SK-N-SH (cell line): ENCODE measurements at regions of chr17 and their contacts with region 1.

Region 1: GRCh38 chr17:34637548-34638525 is 58.5 kb downstream of the TMEM132E start:
- DNase-seq: peak; percentile 92
- H3K4me3 ChIP-seq: no peak overlapping the region; a peak in 1 of 4 replicates
- H3K27ac ChIP-seq: no peak overlapping the region
- H3K4me1 ChIP-seq: peaks cover 0 to 4% of the 10 kb centered on the region in 2 experiments; a peak in 1 of 4 replicates
- H3K27me3 ChIP-seq: no peaks in the 10 kb centered on the region
- CTCF ChIP-seq: peak; percentile 66
- EP300 ChIP-seq: no peak
- RAD21 ChIP-seq: peak; percentile 84

Region 2: GRCh38 chr17:34456121-34456520 is 181.7 kb before region 1 on chr17:
- CTCF ChIA-PET with region 1: no interaction called
- POLR2A ChIA-PET with region 1: no interaction called
- DNase-seq: no peak
- H3K4me3 ChIP-seq: no peak overlapping the region
- H3K27ac ChIP-seq: no peak overlapping the region
- H3K4me1 ChIP-seq: no peaks in the 10 kb centered on the region
- H3K27me3 ChIP-seq: no peaks in the 10 kb centered on the region; the same call in 1 of the 2 replicates
- CTCF ChIP-seq: no peak
- EP300 ChIP-seq: no peak
- RAD21 ChIP-seq: no peak

Region 3: GRCh38 chr17:34542700-34543336 is 95.0 kb before region 1 on chr17:
- CTCF ChIA-PET with region 1: interaction called, 40 read pairs
- POLR2A ChIA-PET with region 1: no interaction called
- DNase-seq: peak; percentile 47
- H3K4me3 ChIP-seq: peak overlapping the region in 1 of 2 experiments; percentile 46; a peak in 1 of 4 replicates
- H3K27ac ChIP-seq: no peak overlapping the region
- H3K4me1 ChIP-seq: no peaks in the 10 kb centered on the region
- H3K27me3 ChIP-seq: no peaks in the 10 kb centered on the region; the same call in 1 of the 2 replicates
- CTCF ChIP-seq: peak; percentile 94
- EP300 ChIP-seq: no peak
- RAD21 ChIP-seq: peak; percentile 77

Region 4: GRCh38 chr17:34584805-34585416 is 52.9 kb before region 1 on chr17:
- CTCF ChIA-PET with region 1: interaction called, 42 read pairs
- POLR2A ChIA-PET with region 1: interaction called, 3 read pairs
- DNase-seq: peak; percentile 75
- H3K4me3 ChIP-seq: no peak overlapping the region
- H3K27ac ChIP-seq: no peak overlapping the region
- H3K4me1 ChIP-seq: peaks cover 0 to 8% of the 10 kb centered on the region in 2 experiments; a peak in 1 of 4 replicates
- H3K27me3 ChIP-seq: peaks cover 66% of the 10 kb centered on the region
- CTCF ChIP-seq: peak; percentile 22; the same call in 1 of the 2 replicates
- EP300 ChIP-seq: no peak
- RAD21 ChIP-seq: peak; percentile 83

Region 5: DNA sequence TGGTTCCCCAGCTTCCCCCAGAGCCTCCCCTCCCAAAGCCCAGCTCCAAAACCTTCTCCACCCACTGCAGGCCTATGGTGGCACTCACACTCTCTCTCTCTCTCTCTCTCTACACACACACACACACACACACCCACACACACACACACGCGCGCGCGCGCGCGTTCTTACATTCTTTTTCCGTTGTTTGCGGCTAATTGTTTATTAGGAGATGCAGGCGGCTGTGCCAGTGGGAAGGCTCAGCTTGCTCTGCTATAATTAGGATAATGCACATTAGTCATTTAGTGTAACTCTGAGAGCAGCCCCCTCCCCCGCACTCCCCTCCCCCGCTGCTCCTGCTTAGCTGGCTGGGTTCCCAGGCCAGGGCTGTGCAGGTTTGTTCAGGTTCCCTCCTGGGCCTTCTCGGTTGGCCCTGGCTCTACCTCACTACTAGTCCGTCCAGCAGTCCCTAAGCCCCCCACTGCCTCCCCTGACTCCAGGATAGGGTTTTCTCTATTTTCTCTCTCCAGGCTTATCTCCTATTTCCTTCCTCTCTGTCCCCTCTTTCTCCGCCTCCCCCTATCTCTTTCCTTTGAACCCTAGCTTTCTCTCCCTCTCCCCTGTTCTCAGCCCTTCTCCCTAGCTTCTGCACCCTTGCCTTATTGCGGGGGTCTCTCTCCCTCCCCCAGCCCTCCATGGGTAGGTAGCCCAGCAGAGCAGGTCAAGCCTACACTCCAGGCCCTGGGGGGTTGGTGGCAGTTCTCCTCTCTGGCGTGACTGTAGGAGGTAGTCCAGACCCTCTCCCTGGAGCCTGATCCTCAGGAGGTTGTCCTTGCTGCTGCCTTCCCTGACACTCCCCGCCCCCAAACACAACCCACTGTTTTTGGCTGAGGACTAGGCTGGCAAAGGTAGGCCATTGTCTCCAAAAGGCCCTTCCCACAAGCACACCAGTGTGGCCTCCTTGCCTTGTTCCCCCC is 24.5 kb before region 1 on chr17:
- CTCF ChIA-PET with region 1: interaction called, 18 read pairs
- POLR2A ChIA-PET with region 1: no interaction called
- DNase-seq: peak; percentile 77
- H3K4me3 ChIP-seq: no peak overlapping the region
- H3K27ac ChIP-seq: peak overlapping the region in 1 of 2 experiments; percentile 36; a peak in 1 of 4 replicates
- H3K4me1 ChIP-seq: peaks cover 0 to 51% of the 10 kb centered on the region in 2 experiments; a peak in 1 of 4 replicates
- H3K27me3 ChIP-seq: no peaks in the 10 kb centered on the region
- CTCF ChIP-seq: no peak
- EP300 ChIP-seq: no peak
- RAD21 ChIP-seq: no peak

Region 6: DNA sequence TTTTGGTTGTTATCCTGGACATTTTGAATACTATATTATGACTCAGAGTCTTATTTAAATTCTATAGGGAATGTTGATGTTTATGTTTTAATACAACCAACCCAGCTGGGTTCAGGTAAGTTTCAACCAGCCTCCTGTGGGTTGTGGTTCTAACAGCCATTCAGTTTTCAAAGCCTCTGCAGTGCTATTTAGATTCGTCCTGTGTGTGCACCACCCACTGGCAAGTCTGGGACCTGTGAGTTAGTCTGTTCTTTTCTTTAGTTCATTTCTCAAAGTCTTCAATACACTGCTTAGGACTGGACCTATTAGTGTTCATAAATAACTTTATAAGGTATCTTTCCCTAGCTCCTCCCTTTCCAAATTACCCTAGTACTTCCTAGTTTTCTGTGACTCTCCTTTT is 112.2 kb after region 1 on chr17:
- CTCF ChIA-PET with region 1: no interaction called
- POLR2A ChIA-PET with region 1: no interaction called
- DNase-seq: no peak
- H3K4me3 ChIP-seq: no peak overlapping the region
- H3K27ac ChIP-seq: no peak overlapping the region
- H3K4me1 ChIP-seq: no peaks in the 10 kb centered on the region
- H3K27me3 ChIP-seq: no peaks in the 10 kb centered on the region
- CTCF ChIP-seq: no peak
- EP300 ChIP-seq: no peak
- RAD21 ChIP-seq: no peak

Region 7: DNA sequence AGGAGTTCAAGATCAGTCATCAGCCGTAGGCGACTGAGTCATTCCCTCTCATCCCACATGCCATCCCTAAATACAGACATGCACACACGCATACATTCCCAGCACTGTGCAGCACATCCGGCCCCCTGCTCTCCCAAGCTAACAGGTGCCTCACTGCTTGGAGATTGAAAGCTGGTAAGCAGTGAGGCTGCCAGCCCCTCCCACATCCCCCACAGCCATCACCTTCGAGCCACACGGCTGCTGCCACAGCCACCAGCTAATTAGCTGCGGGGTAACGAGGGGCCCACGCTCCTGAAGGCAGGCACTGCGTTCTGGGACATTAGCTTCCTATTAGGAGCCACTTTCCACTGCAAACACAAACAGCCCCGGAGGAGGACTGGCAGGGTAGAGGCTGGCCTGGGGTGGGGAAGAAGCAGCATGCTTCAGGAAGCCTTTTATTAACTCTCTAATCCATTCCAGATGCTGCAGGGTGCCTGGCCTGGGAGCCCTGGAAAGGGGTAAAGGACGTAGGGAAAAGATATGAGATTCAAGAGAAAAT is 143.8 kb after region 1 on chr17:
- CTCF ChIA-PET with region 1: interaction called, 16 read pairs
- POLR2A ChIA-PET with region 1: no interaction called
- DNase-seq: peak; percentile 82
- H3K4me3 ChIP-seq: no peak overlapping the region
- H3K27ac ChIP-seq: peak overlapping the region in 1 of 2 experiments; percentile 86; a peak in 2 of 4 replicates
- H3K4me1 ChIP-seq: peaks cover 0 to 36% of the 10 kb centered on the region in 2 experiments; a peak in 2 of 4 replicates
- H3K27me3 ChIP-seq: no peaks in the 10 kb centered on the region
- CTCF ChIP-seq: no peak
- EP300 ChIP-seq: peak in 1 of 2 experiments; percentile 82; a peak in 2 of 4 replicates
- RAD21 ChIP-seq: no peak

Region 8: DNA sequence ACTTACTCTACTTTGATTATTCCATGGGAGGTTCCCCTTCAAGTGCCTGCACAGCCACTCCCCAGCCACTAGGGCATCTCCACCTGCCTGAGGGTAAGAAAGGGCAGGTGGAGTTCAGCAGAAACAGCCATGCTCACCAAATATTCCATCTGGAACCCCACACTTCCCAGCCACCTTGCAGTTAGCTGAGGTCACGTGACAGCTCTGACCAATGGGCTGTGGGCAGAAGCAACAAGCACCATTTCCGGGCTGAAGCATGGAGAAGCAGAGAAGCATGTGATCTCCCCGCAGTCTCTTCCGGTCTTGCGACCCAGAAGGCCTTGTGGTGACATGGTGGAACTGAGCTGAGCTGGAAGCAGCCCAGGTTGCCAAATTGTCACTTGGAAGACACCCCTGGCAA is 214.8 kb after region 1 on chr17:
- CTCF ChIA-PET with region 1: no interaction called
- POLR2A ChIA-PET with region 1: no interaction called
- DNase-seq: no peak
- H3K4me3 ChIP-seq: no peak overlapping the region
- H3K27ac ChIP-seq: no peak overlapping the region
- H3K4me1 ChIP-seq: no peaks in the 10 kb centered on the region
- H3K27me3 ChIP-seq: no peaks in the 10 kb centered on the region
- CTCF ChIP-seq: no peak
- EP300 ChIP-seq: no peak
- RAD21 ChIP-seq: no peak